ENCODE measurements at regions of chr5 and their contacts with region 1.

Region 1: DNA sequence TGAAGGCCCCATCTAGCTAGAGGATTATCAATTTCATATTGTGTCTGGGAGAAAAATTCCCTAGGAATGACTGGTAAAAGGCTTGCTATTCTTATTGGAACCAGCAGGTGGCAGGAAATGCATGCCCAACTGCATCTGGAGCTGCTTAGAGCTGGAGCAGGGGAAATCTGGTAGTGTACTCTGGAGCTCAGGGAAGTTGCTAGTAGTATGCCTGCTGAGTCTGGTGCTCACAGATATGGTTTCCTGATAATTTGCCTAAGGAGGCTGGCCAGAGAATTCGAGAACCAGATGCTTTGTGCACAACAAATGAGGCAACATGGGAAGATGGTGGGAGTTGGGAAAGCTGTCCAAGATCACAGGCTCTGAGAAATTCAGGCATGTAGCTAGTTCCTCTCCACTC is 53.7 kb downstream of the G3BP1 start:
- DNase-seq: peak; percentile 43
- H3K4me3 Mint-ChIP-seq: no peak overlapping the region
- H3K27ac Mint-ChIP-seq: no peak overlapping the region
- H3K4me1 Mint-ChIP-seq: peaks cover 3% of the 10 kb centered on the region
- H3K27me3 Mint-ChIP-seq: no peaks in the 10 kb centered on the region

Region 2: DNA sequence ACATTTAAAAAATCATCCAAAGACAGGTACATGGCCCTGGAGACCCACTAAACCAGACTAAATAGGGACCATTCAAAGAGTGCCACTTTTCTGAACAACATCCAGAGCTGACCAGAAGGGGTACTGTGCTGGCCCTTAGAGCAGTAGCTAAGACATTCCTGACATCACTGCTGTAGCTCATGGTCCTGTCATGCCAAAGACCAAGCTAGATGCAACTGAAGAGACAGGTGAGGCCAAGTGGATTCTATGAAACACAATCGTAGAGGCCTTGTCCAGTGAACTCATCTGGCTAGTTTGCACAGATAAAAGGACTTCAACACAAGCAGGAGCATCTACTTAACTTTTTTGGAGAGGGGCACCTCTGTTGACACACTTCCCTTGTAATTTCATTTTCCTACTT is 10.4 kb before region 1 on chr5:
- CTCF ChIA-PET with region 1: interaction called, 13 read pairs
- POLR2A ChIA-PET with region 1: no interaction called
- DNase-seq: no peak
- H3K4me3 Mint-ChIP-seq: no peak overlapping the region
- H3K27ac Mint-ChIP-seq: no peak overlapping the region
- H3K4me1 Mint-ChIP-seq: no peaks in the 10 kb centered on the region
- H3K27me3 Mint-ChIP-seq: no peaks in the 10 kb centered on the region

Region 3: DNA sequence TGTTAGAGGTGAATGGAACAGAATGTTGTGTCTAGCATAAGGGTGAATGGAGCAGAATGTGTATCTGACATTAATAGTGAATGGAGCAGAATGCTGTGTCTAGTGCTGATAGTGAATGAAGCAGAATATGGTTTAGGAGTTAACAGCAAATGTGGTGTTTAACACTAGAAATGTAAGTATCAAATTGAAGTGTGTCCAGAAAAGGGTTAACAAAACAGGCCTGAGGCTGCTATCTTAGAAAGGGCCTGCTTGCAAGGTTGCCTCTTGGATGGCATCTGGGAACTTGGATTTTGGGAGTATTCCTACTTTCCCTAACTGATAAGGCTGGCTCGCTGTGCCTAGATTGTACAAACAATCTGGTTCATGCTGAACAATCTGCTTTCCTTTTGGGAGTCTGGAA is 22.4 kb after region 1 on chr5:
- CTCF ChIA-PET with region 1: no interaction called
- POLR2A ChIA-PET with region 1: no interaction called
- DNase-seq: no peak
- H3K4me3 Mint-ChIP-seq: no peak overlapping the region
- H3K27ac Mint-ChIP-seq: no peak overlapping the region
- H3K4me1 Mint-ChIP-seq: no peaks in the 10 kb centered on the region
- H3K27me3 Mint-ChIP-seq: no peaks in the 10 kb centered on the region

Region 4: DNA sequence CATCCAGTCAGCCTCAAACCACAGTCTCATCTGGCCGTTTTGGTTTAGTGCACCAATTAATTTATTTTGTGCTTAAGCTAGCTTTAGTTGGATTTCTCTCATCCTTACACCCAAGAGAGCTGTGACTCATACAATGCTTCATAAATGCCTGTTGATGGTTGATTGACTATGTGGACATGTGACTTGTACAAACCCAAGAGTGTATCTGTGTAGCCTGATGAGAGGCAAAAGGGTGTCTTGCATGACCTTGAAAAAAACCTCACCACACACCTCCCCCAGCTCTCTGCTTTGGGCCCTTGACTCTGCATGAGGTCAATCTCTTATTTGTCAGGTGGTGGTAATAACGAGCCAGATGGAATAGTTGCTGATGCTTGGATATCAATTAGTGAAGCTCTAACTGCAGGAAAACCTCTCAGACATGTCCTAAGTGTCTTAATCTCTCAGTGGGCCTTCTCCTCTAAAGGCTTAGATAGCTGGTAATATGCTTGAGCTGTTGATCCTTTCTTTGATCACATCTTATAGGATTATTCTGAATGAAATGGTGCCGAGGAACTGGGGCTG is 109.8 kb after region 1 on chr5:
- CTCF ChIA-PET with region 1: no interaction called
- POLR2A ChIA-PET with region 1: no interaction called
- DNase-seq: no peak
- H3K4me3 Mint-ChIP-seq: no peak overlapping the region
- H3K27ac Mint-ChIP-seq: no peak overlapping the region
- H3K4me1 Mint-ChIP-seq: no peaks in the 10 kb centered on the region
- H3K27me3 Mint-ChIP-seq: no peaks in the 10 kb centered on the region

Region 5: GRCh38 chr5:152142840-152143469 is 317.5 kb after region 1 on chr5:
- CTCF ChIA-PET with region 1: interaction called, 14 read pairs
- POLR2A ChIA-PET with region 1: no interaction called
- DNase-seq: peak; percentile 68
- H3K4me3 Mint-ChIP-seq: no peak overlapping the region
- H3K27ac Mint-ChIP-seq: no peak overlapping the region
- H3K4me1 Mint-ChIP-seq: no peaks in the 10 kb centered on the region
- H3K27me3 Mint-ChIP-seq: peaks cover 5% of the 10 kb centered on the region